ENCODE measurements at regions of chr10 and their contacts with region 1.

Region 1: DNA sequence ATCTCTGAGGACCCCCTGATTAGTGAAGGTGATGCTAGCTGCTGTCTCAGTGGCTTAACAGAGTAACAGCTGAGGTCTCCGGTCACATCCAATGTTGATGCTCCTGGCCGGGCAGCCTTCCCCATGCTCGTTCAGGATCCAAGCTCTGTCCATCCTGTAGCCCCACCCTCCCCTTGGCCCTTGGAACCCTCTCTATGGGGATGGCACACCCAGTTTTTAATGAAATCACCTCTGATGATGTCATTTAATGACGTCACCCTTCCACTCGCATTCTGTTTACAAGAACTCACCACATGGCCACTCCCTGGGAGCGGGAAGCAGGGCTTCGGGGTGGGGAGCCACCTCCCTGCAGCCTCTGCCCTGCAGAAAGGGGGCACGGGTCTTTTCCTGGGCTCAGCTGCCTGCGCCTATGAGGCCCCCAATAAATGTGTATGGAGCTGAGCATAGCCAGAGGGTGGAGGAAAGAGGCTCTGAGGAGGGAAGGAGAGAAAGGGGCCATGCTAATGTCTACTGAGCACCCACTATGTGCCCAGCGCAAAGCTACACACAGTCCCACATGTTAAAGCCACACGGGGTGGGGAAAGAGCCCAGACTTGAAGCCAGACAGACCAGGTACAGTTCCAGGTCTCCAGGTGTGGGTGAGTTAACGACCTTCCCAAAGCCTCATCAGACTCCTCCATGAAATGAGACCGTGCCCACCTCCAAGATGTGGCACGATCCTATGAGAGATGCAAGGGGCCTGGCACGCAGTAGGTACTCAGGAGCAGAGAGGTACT is 95.4 kb downstream of the OAT start:
- DNase-seq: peak; percentile 39
- H3K4me3 ChIP-seq: no peak overlapping the region
- H3K27ac ChIP-seq: no peak overlapping the region
- H3K4me1 ChIP-seq: no peaks in the 10 kb centered on the region
- H3K27me3 ChIP-seq: no peaks in the 10 kb centered on the region
- CTCF ChIP-seq: no peak

Region 2: GRCh38 chr10:124176349-124177176 is 146.7 kb before region 1 on chr10:
- CTCF ChIA-PET with region 1: no interaction called
- dilution Hi-C with region 1: loop called (anchors 5 kb)
- in situ Hi-C with region 1: no loop called
- intact Hi-C with region 1: no loop called
- DNase-seq: no peak
- H3K4me3 ChIP-seq: no peak overlapping the region
- H3K27ac ChIP-seq: no peak overlapping the region
- H3K4me1 ChIP-seq: peaks cover 8% of the 10 kb centered on the region
- H3K27me3 ChIP-seq: no peaks in the 10 kb centered on the region
- CTCF ChIP-seq: no peak